ENCODE measurements at regions of chr1 and their contacts with region 1.

Region 1: DNA sequence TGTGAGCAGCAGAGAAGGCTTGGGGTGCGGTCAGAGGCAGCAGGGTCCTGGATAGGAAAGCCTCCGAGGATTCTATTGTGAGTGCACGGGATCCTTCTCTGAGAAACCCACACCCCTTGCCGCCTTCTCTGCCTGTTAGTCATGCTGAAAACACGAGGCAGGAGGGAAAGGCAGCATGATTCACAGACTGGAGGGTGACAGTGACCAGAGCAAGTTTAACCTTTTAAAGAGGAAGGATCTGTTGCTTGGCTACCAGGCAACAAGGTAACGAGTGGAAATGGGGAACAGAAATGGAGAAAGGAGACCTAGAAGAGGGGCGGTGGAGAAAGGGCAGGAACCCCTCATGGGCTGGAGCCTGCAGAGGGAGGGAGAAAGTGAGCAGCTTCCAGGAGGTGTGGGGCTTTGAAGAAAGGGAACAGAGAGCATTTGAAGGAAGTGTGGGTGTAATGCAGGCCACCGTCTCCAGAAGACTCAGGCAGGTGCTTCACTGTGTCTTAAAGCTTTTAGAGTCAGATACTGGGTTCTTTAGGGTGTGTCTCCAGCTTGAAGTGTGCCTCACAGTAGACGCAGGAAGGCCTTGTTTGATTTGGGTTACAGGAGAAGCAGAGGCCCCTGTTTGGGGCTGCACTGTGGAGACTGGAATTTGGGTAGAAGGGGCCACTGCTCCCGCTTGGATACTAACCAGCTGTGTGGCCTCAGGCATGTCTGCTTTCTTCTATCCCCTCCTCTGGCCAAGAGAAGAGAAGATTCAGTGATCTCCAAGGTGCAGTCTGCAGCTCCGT is 19.1 kb downstream of the OPTC start:
- DNase-seq: peak; percentile 98
- ATAC-seq: peak; percentile 76
- H3K4me3 ChIP-seq: peak overlapping the region; percentile 34
- H3K27ac ChIP-seq: peak overlapping the region; percentile 99
- H3K4me1 ChIP-seq: peaks cover 52% of the 10 kb centered on the region
- H3K27me3 ChIP-seq: no peaks in the 10 kb centered on the region
- CTCF ChIP-seq: no peak

Region 2: GRCh38 chr1:203534527-203535230 is 21.7 kb after region 1 on chr1:
- CTCF ChIA-PET with region 1: no interaction called
- POLR2A ChIA-PET with region 1: interaction called, 8 read pairs
- intact Hi-C with region 1: loop called (anchors 1 kb)
- DNase-seq: peak; percentile 99
- ATAC-seq: peak; percentile 68
- H3K4me3 ChIP-seq: peak overlapping the region; percentile 3; the same call in 1 of the 2 replicates
- H3K27ac ChIP-seq: peak overlapping the region; percentile 87
- H3K4me1 ChIP-seq: peaks cover 63% of the 10 kb centered on the region
- H3K27me3 ChIP-seq: no peaks in the 10 kb centered on the region
- CTCF ChIP-seq: no peak

Region 3: GRCh38 chr1:203558064-203558760 is 45.2 kb after region 1 on chr1:
- CTCF ChIA-PET with region 1: no interaction called
- POLR2A ChIA-PET with region 1: interaction called, 6 read pairs
- intact Hi-C with region 1: loop called (anchors 1 kb)
- DNase-seq: peak; percentile 99
- ATAC-seq: peak; percentile 77
- H3K4me3 ChIP-seq: peak overlapping the region; percentile 27; the same call in 1 of the 2 replicates
- H3K27ac ChIP-seq: peak overlapping the region; percentile 97
- H3K4me1 ChIP-seq: peaks cover 49% of the 10 kb centered on the region
- H3K27me3 ChIP-seq: no peaks in the 10 kb centered on the region
- CTCF ChIP-seq: no peak

Region 4: GRCh38 chr1:203593723-203594122 is 80.7 kb after region 1 on chr1:
- CTCF ChIA-PET with region 1: no interaction called
- POLR2A ChIA-PET with region 1: interaction called, 3 read pairs
- intact Hi-C with region 1: loop called (anchors 1 kb)
- DNase-seq: peak; percentile 69
- ATAC-seq: peak; percentile 25
- H3K4me3 ChIP-seq: no peak overlapping the region
- H3K27ac ChIP-seq: no peak overlapping the region
- H3K4me1 ChIP-seq: peaks cover 36% of the 10 kb centered on the region
- H3K27me3 ChIP-seq: no peaks in the 10 kb centered on the region
- CTCF ChIP-seq: peak; percentile 62

Region 5: DNA sequence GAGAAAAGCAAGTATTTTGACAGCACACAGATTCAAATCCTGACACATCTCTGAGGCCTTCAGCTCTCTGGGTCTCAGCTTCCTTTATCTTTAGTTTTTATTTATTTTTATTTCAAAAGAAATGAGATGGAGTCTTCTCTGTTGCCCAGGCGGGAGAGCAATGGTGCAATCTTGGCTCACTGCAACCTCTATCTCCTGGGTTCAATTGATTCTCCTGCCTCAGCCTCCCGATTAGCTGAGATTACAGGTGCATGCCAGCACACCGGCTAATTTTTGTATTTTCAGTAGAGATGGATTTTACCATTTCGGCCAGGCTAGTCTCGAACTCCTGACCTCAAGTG is 94.5 kb after region 1 on chr1:
- CTCF ChIA-PET with region 1: no interaction called
- POLR2A ChIA-PET with region 1: no interaction called
- intact Hi-C with region 1: loop called (anchors 1 kb)
- DNase-seq: no peak
- ATAC-seq: no peak
- H3K4me3 ChIP-seq: no peak overlapping the region
- H3K27ac ChIP-seq: peak overlapping the region; percentile 61
- H3K4me1 ChIP-seq: peaks cover 19% of the 10 kb centered on the region
- H3K27me3 ChIP-seq: no peaks in the 10 kb centered on the region
- CTCF ChIP-seq: no peak

Region 6: DNA sequence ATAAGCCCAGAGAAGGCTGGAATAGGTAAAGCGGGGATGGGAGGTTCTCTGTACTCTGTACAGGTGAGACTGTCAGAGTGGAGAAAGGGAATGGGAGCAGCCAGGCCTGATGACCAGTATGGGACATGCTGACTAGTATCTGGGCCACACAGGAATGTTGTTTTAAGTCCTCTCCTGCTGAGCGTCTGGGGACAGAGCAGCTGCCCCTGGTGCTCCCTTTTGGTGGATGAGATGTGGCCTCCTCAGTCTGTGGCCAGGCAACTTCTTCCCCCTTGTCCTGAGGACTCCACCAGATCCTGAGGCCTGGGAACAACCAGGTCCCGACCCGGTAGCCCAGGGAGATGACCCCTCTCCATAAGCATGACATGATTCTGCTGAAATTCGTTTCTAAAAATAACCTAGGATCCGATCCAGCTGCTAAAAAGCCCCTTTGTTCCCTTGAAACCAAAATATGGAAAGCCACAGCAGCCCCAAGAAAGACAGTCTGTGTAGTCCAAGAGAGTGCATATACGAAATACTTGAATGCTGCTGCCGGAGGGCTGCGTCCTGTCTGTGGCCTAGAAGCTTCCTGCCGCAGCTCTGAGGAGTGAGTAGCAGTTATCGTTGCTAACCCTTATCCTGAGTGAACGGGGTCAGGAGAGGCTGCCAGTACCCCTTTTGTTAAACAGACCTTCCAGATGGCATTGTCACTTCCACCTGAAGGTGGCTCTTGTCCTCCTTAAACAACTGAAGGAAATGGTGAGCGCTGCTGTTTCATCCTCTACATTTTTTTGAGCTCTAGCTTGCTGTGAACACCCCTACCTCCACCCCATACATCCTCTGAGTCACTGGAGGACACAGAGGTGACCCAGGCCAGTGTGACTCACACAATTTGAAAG is 160.8 kb after region 1 on chr1:
- CTCF ChIA-PET with region 1: interaction called, 3 read pairs
- POLR2A ChIA-PET with region 1: interaction called, 10 read pairs
- intact Hi-C with region 1: no loop called
- DNase-seq: peak; percentile 98
- ATAC-seq: peak; percentile 91
- H3K4me3 ChIP-seq: peak overlapping the region; percentile 6; the same call in 1 of the 2 replicates
- H3K27ac ChIP-seq: peak overlapping the region; percentile 87
- H3K4me1 ChIP-seq: peaks cover 49% of the 10 kb centered on the region
- H3K27me3 ChIP-seq: no peaks in the 10 kb centered on the region
- CTCF ChIP-seq: peak; percentile 70

Region 7: GRCh38 chr1:203733009-203733863 is 220.2 kb after region 1 on chr1:
- CTCF ChIA-PET with region 1: no interaction called
- POLR2A ChIA-PET with region 1: no interaction called
- intact Hi-C with region 1: no loop called
- DNase-seq: no peak
- ATAC-seq: no peak
- H3K4me3 ChIP-seq: no peak overlapping the region
- H3K27ac ChIP-seq: no peak overlapping the region
- H3K4me1 ChIP-seq: no peaks in the 10 kb centered on the region
- H3K27me3 ChIP-seq: no peaks in the 10 kb centered on the region
- CTCF ChIP-seq: no peak